GM23248 (cell line): ENCODE measurements at regions of chr5 and their contacts with region 1.

Region 1: GRCh38 chr5:38193015-38193581 is 65.3 kb upstream of the EGFLAM start:
- DNase-seq: peak; percentile 84
- H3K4me3 ChIP-seq: no peak overlapping the region; the same call in 1 of the 2 replicates
- H3K27ac ChIP-seq: no peak overlapping the region
- H3K4me1 ChIP-seq: no peaks in the 10 kb centered on the region
- H3K27me3 ChIP-seq: peaks cover 19% of the 10 kb centered on the region; the same call in 1 of the 2 replicates

Region 2: DNA sequence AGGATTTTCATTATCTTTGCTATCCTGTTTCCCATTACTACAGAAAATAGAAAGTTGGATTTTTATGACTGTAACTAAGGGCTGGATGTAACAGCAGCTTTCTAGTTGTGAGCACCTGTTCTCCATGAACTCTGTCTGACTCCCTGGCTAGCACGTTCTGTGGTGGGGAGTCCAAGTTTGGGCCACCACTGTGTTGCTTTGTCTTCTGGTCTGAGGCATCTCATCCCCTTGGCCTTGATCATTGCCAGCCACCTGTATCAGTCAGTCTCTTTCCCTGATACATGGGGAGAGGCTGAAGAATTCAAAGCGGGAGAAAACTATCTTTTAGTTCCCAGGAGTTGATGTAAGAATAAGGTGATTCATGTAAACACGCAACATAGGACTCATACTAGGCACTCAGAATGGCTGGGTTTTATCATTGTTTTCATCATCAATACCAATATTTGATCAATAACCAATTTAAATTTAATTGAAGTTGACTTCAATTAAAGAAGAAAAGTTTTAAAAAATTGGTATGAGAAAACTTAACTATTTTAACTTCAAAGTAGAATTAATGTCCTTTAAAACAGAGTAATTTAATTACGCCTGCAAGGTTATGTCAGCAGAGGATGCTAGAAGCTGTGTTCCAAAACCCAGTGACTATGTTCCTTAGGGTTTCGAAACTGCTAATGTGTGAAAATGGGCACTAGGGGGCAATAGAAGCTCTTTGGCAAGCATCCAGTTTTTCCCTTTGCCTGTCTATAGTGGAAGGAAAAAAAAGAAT is 780.4 kb before region 1 on chr5:
- in situ Hi-C with region 1: loop called (anchors 10 kb)
- DNase-seq: peak; percentile 90
- H3K4me3 ChIP-seq: no peak overlapping the region
- H3K27ac ChIP-seq: no peak overlapping the region
- H3K4me1 ChIP-seq: no peaks in the 10 kb centered on the region
- H3K27me3 ChIP-seq: no peaks in the 10 kb centered on the region

Region 3: DNA sequence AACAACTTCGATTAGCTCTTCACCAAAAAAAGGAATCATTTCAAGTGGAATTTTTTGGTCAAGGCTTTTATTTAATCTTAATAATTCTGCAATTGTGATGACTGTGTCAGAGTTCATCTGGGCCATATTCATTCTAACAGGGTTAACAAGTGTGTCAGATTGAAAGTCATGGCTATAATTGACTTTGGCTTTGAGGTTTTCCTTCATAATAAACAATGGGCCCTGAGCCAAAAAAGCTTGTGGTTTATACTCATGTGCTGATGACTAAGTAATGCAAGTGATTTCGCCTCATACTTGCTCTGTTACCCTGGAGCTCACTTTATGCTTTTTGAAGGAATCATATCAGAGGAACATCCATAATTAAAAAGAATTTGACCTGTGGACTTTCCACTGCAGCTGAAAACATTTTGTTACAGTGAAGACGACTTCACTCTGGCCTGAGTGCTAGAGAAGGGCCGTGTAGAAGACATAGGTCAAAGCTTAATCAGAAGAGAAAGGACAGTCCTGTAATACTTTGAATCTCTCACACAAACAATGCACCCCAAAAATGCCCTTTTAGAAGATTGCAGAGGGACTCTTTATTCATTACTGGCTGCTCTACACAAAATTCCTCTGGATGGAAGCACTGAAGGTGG is 454.9 kb before region 1 on chr5:
- in situ Hi-C with region 1: loop called (anchors 25 kb)
- DNase-seq: peak; percentile 95
- H3K4me3 ChIP-seq: peak overlapping the region; percentile 44
- H3K27ac ChIP-seq: peak overlapping the region; percentile 91
- H3K4me1 ChIP-seq: peaks cover 67% of the 10 kb centered on the region
- H3K27me3 ChIP-seq: no peaks in the 10 kb centered on the region

Region 4: GRCh38 chr5:37825334-37825915 is 367.7 kb before region 1 on chr5:
- in situ Hi-C with region 1: loop called (anchors 5 kb)
- DNase-seq: no peak
- H3K4me3 ChIP-seq: no peak overlapping the region
- H3K27ac ChIP-seq: no peak overlapping the region
- H3K4me1 ChIP-seq: no peaks in the 10 kb centered on the region
- H3K27me3 ChIP-seq: no peaks in the 10 kb centered on the region

Region 5: DNA sequence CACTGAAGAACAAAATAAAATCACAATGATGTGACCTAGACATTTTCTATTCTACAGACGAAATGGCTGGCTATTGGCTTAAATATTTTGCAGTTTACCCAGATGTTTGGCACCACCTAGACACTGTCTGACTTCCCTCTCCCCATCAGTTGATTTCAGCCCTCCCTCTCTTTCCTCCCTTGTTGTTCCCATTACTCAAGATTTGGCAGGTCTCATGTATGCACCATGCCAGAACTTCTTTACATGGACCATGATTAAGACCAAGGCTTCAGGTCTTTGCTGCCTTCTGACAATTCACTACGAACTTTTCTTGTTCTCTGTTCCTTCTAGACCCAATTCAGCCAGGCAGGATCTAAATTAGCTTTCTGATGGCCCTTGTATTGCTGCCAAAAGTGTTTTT is 286.7 kb before region 1 on chr5:
- in situ Hi-C with region 1: no loop called
- DNase-seq: no peak
- H3K4me3 ChIP-seq: no peak overlapping the region
- H3K27ac ChIP-seq: no peak overlapping the region
- H3K4me1 ChIP-seq: no peaks in the 10 kb centered on the region
- H3K27me3 ChIP-seq: peaks cover 33% of the 10 kb centered on the region